Breast epithelium (tissue), 4 donors: ENCODE measurements at regions of chr4 and their contacts with region 1.

Region 1: GRCh38 chr4:154135576-154135975 is 346.7 kb upstream of the SFRP2 start:
- DNase-seq: no peak
- H3K4me3 ChIP-seq: no peak overlapping the region
- H3K27ac ChIP-seq: no peak overlapping the region
- H3K4me1 ChIP-seq: no peaks in the 10 kb centered on the region
- H3K27me3 ChIP-seq: no peaks in the 10 kb centered on the region
- CTCF ChIP-seq: no peak
- POLR2A ChIP-seq: no peak

Region 2: DNA sequence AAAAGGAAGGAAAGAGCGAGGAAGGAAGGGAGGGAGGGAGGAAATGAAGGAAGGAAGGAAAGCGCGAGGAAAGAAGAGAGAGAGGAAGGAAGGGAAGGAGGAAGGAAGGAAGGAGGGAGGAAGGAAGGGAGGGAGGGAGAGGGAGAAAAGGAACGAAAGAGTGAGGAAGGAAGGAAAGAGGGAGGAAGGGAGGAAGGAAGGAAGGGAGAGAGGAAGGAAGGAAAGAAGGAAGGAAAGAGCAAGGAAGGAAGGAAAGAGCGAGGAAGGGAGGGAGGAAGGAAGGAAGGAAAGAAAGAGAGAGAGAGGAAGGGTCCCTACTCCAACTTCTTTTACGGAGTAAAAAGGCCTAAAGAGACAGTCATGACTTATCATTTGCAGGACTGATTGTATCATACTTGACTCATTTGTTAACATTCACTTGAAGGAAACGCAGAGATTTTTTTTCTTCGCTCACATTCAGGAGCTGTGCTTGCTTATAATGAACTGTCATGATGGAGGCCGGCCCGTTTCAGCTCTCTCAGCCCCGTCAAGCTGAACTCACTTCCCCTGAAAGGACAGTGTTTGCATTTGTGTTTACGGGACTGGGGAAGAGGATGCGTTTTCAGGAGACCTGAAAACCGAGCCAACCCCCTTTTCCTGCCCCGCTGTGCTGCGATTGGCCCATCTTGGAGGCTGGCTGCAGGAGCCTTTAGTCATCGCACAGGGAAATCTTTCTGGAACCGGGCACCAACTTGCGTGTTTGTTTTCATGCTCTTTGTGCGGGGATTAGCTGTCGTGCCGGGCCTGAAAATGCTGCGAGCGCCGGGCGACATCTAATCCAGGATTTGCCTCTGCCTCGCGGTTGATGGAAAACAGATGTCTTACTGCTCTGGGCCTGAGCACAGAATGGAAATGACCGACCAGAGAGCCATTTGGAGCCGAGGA is 913.5 kb before region 1 on chr4:
- intact Hi-C with region 1: no loop called
- DNase-seq: peak in 1 of 2 donors; percentile 56
- H3K4me3 ChIP-seq: peak overlapping the region; percentile 60 to 79 (median 78)
- H3K27ac ChIP-seq: peak overlapping the region; percentile 93 to 94
- H3K4me1 ChIP-seq: peaks cover 0 to 4% of the 10 kb centered on the region in 2 donors
- H3K27me3 ChIP-seq: no peaks in the 10 kb centered on the region
- CTCF ChIP-seq: no peak
- POLR2A ChIP-seq: peak; percentile 26

Region 3: DNA sequence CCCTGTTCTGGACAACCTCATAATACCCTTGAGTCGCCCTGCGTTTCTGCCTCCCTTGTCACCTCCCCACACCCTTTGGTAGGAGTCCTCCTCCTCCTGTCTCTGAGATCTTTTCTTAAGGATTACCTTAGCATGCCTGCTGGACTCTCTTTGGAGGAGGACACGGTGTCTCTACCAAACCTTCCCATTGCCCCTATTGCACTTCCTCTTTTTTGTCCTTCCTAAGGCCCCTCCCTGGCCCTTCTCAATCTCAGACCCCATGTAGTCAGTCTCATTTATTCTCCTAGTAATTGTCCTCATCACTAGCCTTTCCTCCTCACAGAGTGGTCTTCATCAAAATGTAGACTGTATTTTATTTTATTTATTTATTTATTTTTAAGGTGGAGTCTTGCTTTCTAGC is 11.7 kb before region 1 on chr4:
- intact Hi-C with region 1: loop called (anchors 1 kb)
- DNase-seq: no peak
- H3K4me3 ChIP-seq: no peak overlapping the region
- H3K27ac ChIP-seq: no peak overlapping the region
- H3K4me1 ChIP-seq: no peaks in the 10 kb centered on the region
- H3K27me3 ChIP-seq: no peaks in the 10 kb centered on the region
- CTCF ChIP-seq: no peak
- POLR2A ChIP-seq: no peak

Region 4: GRCh38 chr4:154152546-154152945 is 17.0 kb after region 1 on chr4:
- intact Hi-C with region 1: no loop called
- DNase-seq: no peak
- H3K4me3 ChIP-seq: no peak overlapping the region
- H3K27ac ChIP-seq: no peak overlapping the region
- H3K4me1 ChIP-seq: no peaks in the 10 kb centered on the region
- H3K27me3 ChIP-seq: no peaks in the 10 kb centered on the region
- CTCF ChIP-seq: no peak
- POLR2A ChIP-seq: no peak